Naive thymus-derived CD4-positive, alpha-beta T cell (primary cell): ENCODE measurements at regions of chr9 and their contacts with region 1.

Region 1: GRCh38 chr9:137605121-137606004 is at the start of gene ARRDC1:
- DNase-seq: peak; percentile 77 to 95 (median 88)
- ATAC-seq: peak; percentile 91
- H3K4me3 ChIP-seq: peak within 1 kb of the TSS; percentile 69
- H3K4me3 Mint-ChIP-seq: peak within 1 kb of the TSS; percentile 66 to 92 (median 84)
- H3K27ac ChIP-seq: peak within 1 kb of the TSS; percentile 85
- H3K27ac Mint-ChIP-seq: peak within 1 kb of the TSS in 5 of 9 donors; percentile 39 to 82 (median 52)
- H3K4me1 ChIP-seq: peaks cover 6 to 10% of the 10 kb centered on the region in 2 donors
- H3K4me1 Mint-ChIP-seq: peaks cover 0 to 39% (median 24%) of the 10 kb centered on the region in 7 donors
- H3K27me3 ChIP-seq: no peaks in the 10 kb centered on the region
- H3K27me3 Mint-ChIP-seq: no peaks in the 10 kb centered on the region
- total RNA-seq, gene ARRDC1: 53.7 to 126 (median 82.6) TPM

Region 2: GRCh38 chr9:137423004-137423874 is 182.1 kb before region 1 on chr9 and contains the starts of genes EXD3 and NOXA1:
- CTCF ChIA-PET with region 1: no interaction called
- POLR2A ChIA-PET with region 1: no interaction called
- intact Hi-C with region 1: loop called in 1 of 2 experiments (anchors 1 kb)
- DNase-seq: peak; percentile 84 to 99 (median 91)
- ATAC-seq: peak; percentile 97
- H3K4me3 ChIP-seq: peak within 1 kb of the TSS; percentile 65
- H3K4me3 Mint-ChIP-seq: peak within 1 kb of the TSS; percentile 76 to 90 (median 82)
- H3K27ac ChIP-seq: peak within 1 kb of the TSS; percentile 62
- H3K27ac Mint-ChIP-seq: peak within 1 kb of the TSS; percentile 28 to 91 (median 66)
- H3K4me1 ChIP-seq: peaks cover 0 to 5% of the 10 kb centered on the region in 2 donors
- H3K4me1 Mint-ChIP-seq: peaks cover 2 to 21% (median 13%) of the 10 kb centered on the region in 7 donors
- H3K27me3 ChIP-seq: no peaks in the 10 kb centered on the region
- H3K27me3 Mint-ChIP-seq: peaks cover 0 to 9% (median 0%) of the 10 kb centered on the region in 5 donors
- total RNA-seq, gene EXD3: 11.7 to 27.2 (median 24.7) TPM
- total RNA-seq, gene NOXA1: 0.94 to 11.1 (median 6.0) TPM

Region 3: DNA sequence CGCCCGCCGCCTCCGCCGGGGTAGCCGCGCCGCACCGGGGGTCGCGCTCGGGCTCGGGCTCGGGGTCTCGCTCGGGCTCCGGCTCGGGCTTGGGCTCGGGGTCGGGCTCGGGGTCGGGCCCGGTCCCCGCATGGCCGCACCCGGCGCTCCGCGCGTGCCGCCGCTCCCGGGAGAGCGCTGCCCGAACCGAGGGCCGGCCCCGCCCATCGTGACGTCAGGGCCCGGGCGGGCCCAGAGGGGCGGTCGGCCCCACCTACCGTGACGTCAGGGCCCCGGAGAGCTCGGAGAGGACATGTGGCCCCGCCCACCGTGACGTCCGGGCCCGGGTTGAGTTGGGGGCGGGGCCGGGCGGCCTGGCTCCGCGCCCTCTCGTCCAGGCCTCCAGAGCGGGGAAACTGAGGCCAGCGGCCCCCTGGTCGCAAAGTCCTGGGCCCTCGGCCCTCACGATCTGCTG is 146.2 kb before region 1 on chr9 and contains the start of gene NSMF:
- CTCF ChIA-PET with region 1: no interaction called
- POLR2A ChIA-PET with region 1: no interaction called
- intact Hi-C with region 1: loop called (anchors 1 to 2 kb)
- DNase-seq: peak; percentile 90 to 99 (median 95)
- ATAC-seq: peak; percentile 89
- H3K4me3 ChIP-seq: peak within 1 kb of the TSS; percentile 67
- H3K4me3 Mint-ChIP-seq: peak within 1 kb of the TSS; percentile 55 to 79 (median 68)
- H3K27ac ChIP-seq: peak within 1 kb of the TSS; percentile 93
- H3K27ac Mint-ChIP-seq: peak within 1 kb of the TSS; percentile 28 to 98 (median 91)
- H3K4me1 ChIP-seq: peaks cover 36 to 54% of the 10 kb centered on the region in 2 donors
- H3K4me1 Mint-ChIP-seq: peaks cover 0 to 55% (median 33%) of the 10 kb centered on the region in 7 donors
- H3K27me3 ChIP-seq: no peaks in the 10 kb centered on the region
- H3K27me3 Mint-ChIP-seq: no peaks in the 10 kb centered on the region
- total RNA-seq, gene NSMF: 22.9 to 92.0 (median 57.3) TPM

Region 4: GRCh38 chr9:137578518-137579258 is 26.7 kb before region 1 on chr9 and contains the start of gene DPH7:
- CTCF ChIA-PET with region 1: no interaction called
- POLR2A ChIA-PET with region 1: no interaction called
- intact Hi-C with region 1: loop called (anchors 1 kb)
- DNase-seq: peak; percentile 84 to 98 (median 92)
- ATAC-seq: peak; percentile 99
- H3K4me3 ChIP-seq: peak within 1 kb of the TSS; percentile 83
- H3K4me3 Mint-ChIP-seq: peak within 1 kb of the TSS; percentile 72 to 90 (median 84)
- H3K27ac ChIP-seq: peak within 1 kb of the TSS; percentile 94
- H3K27ac Mint-ChIP-seq: peak within 1 kb of the TSS in 8 of 9 donors; percentile 33 to 84 (median 64)
- H3K4me1 ChIP-seq: peaks cover 8 to 13% of the 10 kb centered on the region in 2 donors
- H3K4me1 Mint-ChIP-seq: peaks cover 12 to 36% (median 30%) of the 10 kb centered on the region in 7 donors
- H3K27me3 ChIP-seq: no peaks in the 10 kb centered on the region
- H3K27me3 Mint-ChIP-seq: no peaks in the 10 kb centered on the region
- total RNA-seq, gene DPH7: 43.4 to 77.5 (median 49.9) TPM

Region 5: GRCh38 chr9:137590462-137591383 is 14.6 kb before region 1 on chr9 and contains the start of gene ZMYND19:
- CTCF ChIA-PET with region 1: no interaction called
- POLR2A ChIA-PET with region 1: no interaction called
- intact Hi-C with region 1: loop called (anchors 1 kb)
- DNase-seq: peak; percentile 84 to 97 (median 92)
- ATAC-seq: peak; percentile 99
- H3K4me3 ChIP-seq: peak within 1 kb of the TSS; percentile 64
- H3K4me3 Mint-ChIP-seq: peak within 1 kb of the TSS; percentile 88 to 96 (median 94)
- H3K27ac ChIP-seq: peak within 1 kb of the TSS; percentile 71
- H3K27ac Mint-ChIP-seq: peak within 1 kb of the TSS in 8 of 9 donors; percentile 69 to 95 (median 90)
- H3K4me1 ChIP-seq: peaks cover 0 to 12% of the 10 kb centered on the region in 2 donors
- H3K4me1 Mint-ChIP-seq: peaks cover 7 to 27% (median 16%) of the 10 kb centered on the region in 7 donors
- H3K27me3 ChIP-seq: no peaks in the 10 kb centered on the region
- H3K27me3 Mint-ChIP-seq: no peaks in the 10 kb centered on the region
- total RNA-seq, gene ZMYND19: 13.3 to 32.4 (median 26.6) TPM

Region 6: GRCh38 chr9:137618105-137619067 is 13.0 kb after region 1 on chr9 and contains the start of gene EHMT1:
- CTCF ChIA-PET with region 1: no interaction called
- POLR2A ChIA-PET with region 1: interaction called, 7 read pairs
- intact Hi-C with region 1: loop called (anchors 1 kb)
- DNase-seq: peak; percentile 79 to 99 (median 94)
- ATAC-seq: peak; percentile 95
- H3K4me3 ChIP-seq: peak within 1 kb of the TSS; percentile 80
- H3K4me3 Mint-ChIP-seq: peak within 1 kb of the TSS; percentile 86 to 98 (median 90)
- H3K27ac ChIP-seq: peak within 1 kb of the TSS; percentile 89
- H3K27ac Mint-ChIP-seq: peak within 1 kb of the TSS; percentile 70 to 96 (median 92)
- H3K4me1 ChIP-seq: peaks cover 21 to 29% of the 10 kb centered on the region in 2 donors
- H3K4me1 Mint-ChIP-seq: peaks cover 26 to 48% (median 43%) of the 10 kb centered on the region in 7 donors
- H3K27me3 ChIP-seq: no peaks in the 10 kb centered on the region
- H3K27me3 Mint-ChIP-seq: no peaks in the 10 kb centered on the region
- total RNA-seq, gene EHMT1: 111 to 132 (median 117) TPM

Region 7: DNA sequence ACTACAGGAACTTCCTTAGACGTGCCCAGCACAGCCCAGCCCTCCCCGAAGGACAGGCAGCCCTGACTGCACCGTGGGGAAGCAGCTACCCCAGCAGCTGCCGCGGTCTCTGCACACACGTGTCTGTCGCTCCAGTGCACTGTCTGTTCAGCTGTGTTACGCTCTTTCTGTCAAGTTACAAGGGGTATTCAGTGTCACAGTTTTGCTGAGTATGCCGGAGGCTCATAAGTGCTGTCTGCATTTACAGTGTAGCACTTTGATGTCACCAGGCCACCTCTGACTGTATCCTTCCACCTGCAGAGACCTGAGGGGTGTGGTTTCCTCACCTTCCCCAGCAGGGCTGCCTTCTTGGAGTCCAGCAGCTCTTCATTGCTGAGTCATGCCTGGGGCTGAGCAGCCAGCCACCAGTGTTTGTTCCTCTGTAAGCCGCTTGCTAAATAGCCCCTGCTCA is 140.2 kb after region 1 on chr9:
- CTCF ChIA-PET with region 1: no interaction called
- POLR2A ChIA-PET with region 1: no interaction called
- intact Hi-C with region 1: no loop called
- DNase-seq: peak in 1 of 9 donors; percentile 8
- ATAC-seq: peak; percentile 80
- H3K4me3 ChIP-seq: no peak overlapping the region
- H3K4me3 Mint-ChIP-seq: peak overlapping the region in 2 of 10 donors; percentile 1 to 4
- H3K27ac ChIP-seq: no peak overlapping the region
- H3K27ac Mint-ChIP-seq: peak overlapping the region in 5 of 9 donors; percentile 48 to 83 (median 69)
- H3K4me1 ChIP-seq: no peaks in the 10 kb centered on the region
- H3K4me1 Mint-ChIP-seq: peaks cover 6 to 40% (median 14%) of the 10 kb centered on the region in 7 donors
- H3K27me3 ChIP-seq: no peaks in the 10 kb centered on the region
- H3K27me3 Mint-ChIP-seq: no peaks in the 10 kb centered on the region